ENCODE measurements at regions of chr4 and their contacts with region 1.

Region 1: DNA sequence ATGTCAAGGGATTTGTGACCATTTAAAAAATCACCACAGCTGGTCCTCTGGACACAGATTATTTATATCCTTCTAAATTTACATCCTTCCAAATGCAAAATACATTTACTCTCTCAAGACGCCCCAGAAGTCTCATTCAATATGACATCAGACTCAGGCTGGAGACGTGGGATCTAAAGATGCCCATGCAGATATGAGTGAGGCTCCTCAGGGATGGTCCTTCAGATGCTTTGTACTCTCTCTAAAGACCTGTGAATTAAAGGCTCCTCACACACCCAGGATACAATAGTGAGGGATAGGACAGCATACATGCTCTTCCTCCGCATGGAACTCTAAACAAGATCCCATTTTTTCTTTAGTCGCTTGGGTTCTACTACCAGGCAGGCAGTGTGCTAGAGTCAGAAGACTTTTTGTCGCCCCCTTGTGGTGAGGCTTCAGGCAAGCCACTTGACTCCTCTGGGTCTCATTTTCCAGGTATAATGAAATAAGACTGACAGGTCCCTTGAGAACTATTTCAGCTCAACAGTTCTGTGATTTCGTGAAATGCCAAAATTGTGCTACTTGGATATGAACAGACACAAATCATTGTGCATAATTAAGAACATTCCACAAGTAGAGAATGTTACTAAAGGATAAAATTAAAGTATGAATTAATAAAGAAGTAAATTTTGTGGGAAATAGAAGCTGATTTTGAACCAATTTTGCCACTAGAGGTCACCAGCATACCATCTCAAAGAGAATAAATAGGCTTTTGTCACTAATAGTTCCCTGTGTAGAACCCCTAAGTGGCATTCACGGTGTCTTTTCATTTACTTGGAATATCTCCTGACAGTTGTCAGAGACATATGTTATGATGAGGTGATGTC is 13.7 kb upstream of the SCOC start:
- DNase-seq: peak; percentile 83
- ATAC-seq: peak; percentile 99
- H3K4me3 ChIP-seq: no peak overlapping the region
- H3K27ac ChIP-seq: no peak overlapping the region
- H3K4me1 ChIP-seq: no peaks in the 10 kb centered on the region
- H3K27me3 ChIP-seq: no peaks in the 10 kb centered on the region
- CTCF ChIP-seq: peak; percentile 87 to 97 (median 93)
- POLR2A ChIP-seq: no peak
- RAD21 ChIP-seq: peak; percentile 64

Region 2: GRCh38 chr4:140012688-140013486 is 346.9 kb before region 1 on chr4:
- CTCF ChIA-PET with region 1: interaction called, 12 read pairs
- POLR2A ChIA-PET with region 1: no interaction called
- RAD21 ChIA-PET with region 1: no interaction called
- intact Hi-C with region 1: loop called (anchors 1 kb)
- DNase-seq: peak; percentile 50
- ATAC-seq: peak; percentile 98
- H3K4me3 ChIP-seq: no peak overlapping the region
- H3K27ac ChIP-seq: no peak overlapping the region
- H3K4me1 ChIP-seq: peaks cover 3 to 7% of the 10 kb centered on the region in 2 experiments; a peak in 2 of 4 replicates
- H3K27me3 ChIP-seq: no peaks in the 10 kb centered on the region
- CTCF ChIP-seq: peak; percentile 69 to 87 (median 78)
- POLR2A ChIP-seq: no peak
- RAD21 ChIP-seq: peak; percentile 95

Region 3: DNA sequence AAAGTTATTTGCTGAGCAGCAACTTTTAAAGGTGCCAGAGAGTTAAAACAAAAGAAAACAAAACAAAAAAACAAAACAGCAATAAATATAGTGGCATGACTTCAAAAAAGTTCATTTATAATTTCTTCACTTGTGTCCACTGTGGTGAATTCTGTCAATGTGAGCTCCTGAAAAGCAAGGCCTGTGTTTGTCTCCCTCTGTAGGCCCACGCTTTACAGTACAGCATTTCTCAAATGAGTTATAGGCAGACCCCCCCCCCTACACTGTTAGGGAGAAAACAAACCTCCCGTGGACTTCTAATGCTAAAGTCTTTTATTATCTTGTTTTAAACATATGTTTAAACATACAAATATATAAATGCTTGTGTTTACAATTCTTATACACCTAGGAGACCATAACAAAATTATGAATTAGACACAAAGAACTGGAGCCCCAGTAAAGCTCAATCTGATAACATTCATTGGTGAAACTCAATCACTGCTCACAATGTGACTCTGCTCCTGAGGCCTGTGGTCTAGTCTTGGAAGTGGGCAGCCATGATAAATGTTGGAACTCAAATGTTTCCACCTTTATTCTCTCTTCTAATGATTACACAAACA is 33.3 kb before region 1 on chr4:
- CTCF ChIA-PET with region 1: interaction called, 19 read pairs
- POLR2A ChIA-PET with region 1: no interaction called
- RAD21 ChIA-PET with region 1: interaction called in 1 of 2 experiments, 4 read pairs
- intact Hi-C with region 1: no loop called
- DNase-seq: peak; percentile 33
- ATAC-seq: peak; percentile 93
- H3K4me3 ChIP-seq: no peak overlapping the region
- H3K27ac ChIP-seq: no peak overlapping the region
- H3K4me1 ChIP-seq: no peaks in the 10 kb centered on the region
- H3K27me3 ChIP-seq: no peaks in the 10 kb centered on the region
- CTCF ChIP-seq: peak; percentile 75 to 77 (median 76)
- POLR2A ChIP-seq: no peak
- RAD21 ChIP-seq: peak; percentile 85

Region 4: DNA sequence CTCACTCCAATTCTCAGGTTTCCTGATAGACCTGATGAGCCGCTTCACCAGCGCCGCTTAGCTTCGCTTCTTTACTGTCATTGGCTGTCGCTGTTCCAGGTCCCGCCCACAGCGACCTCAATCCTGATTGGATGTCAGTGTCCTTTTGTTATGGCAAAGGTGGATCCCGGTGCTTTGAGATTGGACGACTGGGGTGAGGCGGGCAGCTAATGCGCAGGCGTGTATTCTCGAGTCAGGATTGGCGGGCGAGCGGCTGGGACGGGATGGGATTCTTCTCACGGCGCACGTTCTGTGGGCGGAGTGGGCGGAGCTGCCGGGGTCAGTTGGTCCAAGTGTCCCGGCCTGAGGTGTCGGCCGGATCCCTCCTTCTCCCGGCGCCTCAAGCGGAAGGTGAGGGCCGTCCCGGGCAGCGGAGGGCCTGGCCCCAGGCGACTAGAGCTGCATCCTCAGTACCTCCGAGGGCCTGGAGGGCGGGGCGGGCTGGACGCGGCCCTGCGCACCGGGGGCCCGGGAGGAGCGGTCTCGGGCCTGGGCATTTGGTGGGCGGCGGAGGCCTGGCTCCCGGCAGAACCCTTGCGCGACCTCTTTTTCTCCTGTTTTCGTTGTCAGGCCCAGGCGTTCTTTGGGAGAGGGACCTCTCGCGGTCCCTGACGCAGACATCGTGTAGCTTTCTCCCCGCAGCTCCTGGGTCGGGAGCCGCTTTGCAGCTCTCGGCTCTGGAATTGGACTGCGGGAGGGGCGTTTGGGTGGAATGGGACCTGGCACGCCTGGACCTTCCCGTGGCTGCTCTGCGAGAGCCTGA is 13.7 kb after region 1 on chr4 and contains the start of gene SCOC:
- CTCF ChIA-PET with region 1: interaction called, 35 read pairs
- POLR2A ChIA-PET with region 1: interaction called, 7 read pairs
- RAD21 ChIA-PET with region 1: no interaction called
- intact Hi-C with region 1: no loop called
- DNase-seq: peak; percentile 98
- ATAC-seq: peak; percentile 94
- H3K4me3 ChIP-seq: peak within 1 kb of the TSS; percentile 77 to 84
- H3K27ac ChIP-seq: peak within 1 kb of the TSS; percentile 88
- H3K4me1 ChIP-seq: peaks cover 5 to 19% of the 10 kb centered on the region in 2 experiments
- H3K27me3 ChIP-seq: no peaks in the 10 kb centered on the region
- CTCF ChIP-seq: no peak
- POLR2A ChIP-seq: peak; percentile 50
- RAD21 ChIP-seq: no peak
- total RNA-seq, gene SCOC: 52.2 TPM

Region 5: DNA sequence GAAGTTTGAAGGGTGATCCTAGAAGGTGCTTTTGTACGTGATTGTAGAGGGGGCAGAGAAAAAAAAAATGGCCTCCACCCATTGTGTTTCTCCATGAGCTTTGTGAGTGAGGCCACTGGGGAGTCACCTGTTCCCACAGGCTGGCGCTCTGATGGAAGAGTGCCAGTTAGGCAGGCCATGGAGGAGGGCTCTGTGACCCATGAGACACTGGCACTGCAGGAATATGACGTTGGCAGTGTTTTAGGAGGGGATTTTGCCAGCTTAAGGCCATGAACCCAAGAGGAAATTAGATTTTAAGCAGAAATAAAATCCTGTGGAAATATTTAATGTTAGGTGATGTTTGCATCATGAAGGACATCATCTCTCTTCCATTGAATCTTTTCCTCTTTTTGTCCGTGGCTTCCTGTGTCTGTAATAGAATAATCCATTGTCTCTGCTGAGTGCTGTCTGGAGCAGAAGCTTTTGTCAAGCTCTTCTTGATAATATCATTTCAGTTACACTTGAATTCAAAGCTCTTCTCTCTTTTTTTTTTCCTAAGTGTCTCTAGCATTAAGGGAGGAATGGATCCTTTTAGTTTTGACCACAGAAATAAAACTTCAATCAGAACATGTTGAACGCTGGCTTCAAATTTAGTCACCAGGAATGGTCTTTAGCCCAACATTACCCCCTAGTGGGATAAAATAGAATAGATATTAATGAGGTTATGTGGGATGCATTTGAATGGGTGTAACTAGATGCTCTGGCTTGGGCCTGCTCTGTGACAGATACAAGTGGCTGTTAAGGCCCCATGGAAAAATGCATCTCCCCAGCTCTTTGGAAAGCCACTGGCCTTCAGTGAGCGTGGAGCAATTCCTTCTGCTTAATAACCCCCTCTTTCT is 250.0 kb after region 1 on chr4:
- CTCF ChIA-PET with region 1: interaction called, 41 read pairs
- POLR2A ChIA-PET with region 1: no interaction called
- RAD21 ChIA-PET with region 1: interaction called in 1 of 2 experiments, 3 read pairs
- intact Hi-C with region 1: loop called (anchors 1 kb)
- DNase-seq: peak; percentile 41
- ATAC-seq: peak; percentile 98
- H3K4me3 ChIP-seq: no peak overlapping the region
- H3K27ac ChIP-seq: no peak overlapping the region
- H3K4me1 ChIP-seq: 0 out of 4 replicates have a peak, but pooled peaks cover 0 to 5% of the 10 kb centered on the region in 2 experiments
- H3K27me3 ChIP-seq: no peaks in the 10 kb centered on the region
- CTCF ChIP-seq: peak; percentile 41 to 77 (median 65); a peak in 5 of 6 replicates
- POLR2A ChIP-seq: no peak
- RAD21 ChIP-seq: peak; percentile 80

Region 6: GRCh38 chr4:140637836-140638235 is 278.0 kb after region 1 on chr4:
- CTCF ChIA-PET with region 1: interaction called, 16 read pairs
- POLR2A ChIA-PET with region 1: no interaction called
- RAD21 ChIA-PET with region 1: no interaction called
- intact Hi-C with region 1: loop called (anchors 1 kb)
- DNase-seq: peak; percentile 35
- ATAC-seq: peak; percentile 86
- H3K4me3 ChIP-seq: no peak overlapping the region
- H3K27ac ChIP-seq: no peak overlapping the region
- H3K4me1 ChIP-seq: peaks cover 14 to 19% of the 10 kb centered on the region in 2 experiments
- H3K27me3 ChIP-seq: no peaks in the 10 kb centered on the region
- CTCF ChIP-seq: peak; percentile 65 to 88 (median 76); a peak in 5 of 6 replicates
- POLR2A ChIP-seq: no peak
- RAD21 ChIP-seq: peak; percentile 79

Measured in HCT116 (cell line).